ENCODE measurements at regions of chr12 and their contacts with region 1.

Region 1: DNA sequence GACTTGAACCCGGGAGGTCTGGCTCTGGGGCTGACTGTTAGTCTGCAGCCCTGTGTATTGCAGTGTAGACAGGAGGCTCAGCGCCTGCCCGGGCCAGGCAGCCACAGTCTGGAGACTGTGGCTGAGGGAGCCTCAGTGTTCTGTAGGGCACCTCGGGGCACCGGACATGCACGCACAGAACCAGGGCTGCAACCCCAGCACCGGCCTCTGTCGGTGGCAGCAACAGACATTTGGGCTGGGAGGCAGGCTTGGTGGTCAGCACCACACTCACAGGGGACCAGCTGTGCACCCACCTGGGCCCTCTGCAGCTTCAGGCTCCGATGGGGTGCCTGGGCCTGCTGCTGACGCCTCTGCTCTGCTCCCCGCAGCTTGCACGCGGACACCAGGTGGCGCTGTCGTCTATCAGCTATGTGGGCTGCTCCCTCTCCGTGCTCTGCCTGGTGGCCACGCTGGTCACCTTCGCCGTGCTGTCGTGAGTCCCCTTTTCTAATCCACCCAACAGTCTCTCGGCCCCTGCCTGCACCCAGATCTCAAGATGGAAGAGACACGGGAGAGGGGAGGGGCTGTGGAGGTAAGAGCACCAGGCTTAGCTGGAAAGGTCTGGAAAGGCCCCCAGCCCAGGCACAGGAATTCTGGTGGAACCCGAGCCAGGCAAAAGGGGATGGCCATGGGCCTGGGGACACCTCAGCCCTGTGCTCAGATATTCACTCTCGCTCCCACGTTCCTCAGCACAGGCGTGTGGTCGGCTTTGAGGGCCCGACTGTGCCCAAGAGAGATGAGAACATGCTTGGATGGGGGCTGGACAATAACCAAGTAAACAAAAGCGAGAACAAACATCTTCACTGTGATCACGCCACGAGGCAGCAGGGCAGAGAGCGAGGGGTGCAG is 151.0 kb downstream of the ADGRD1 start:
- ATAC-seq: peak; percentile 91 to 99 (median 94)
- H3K4me3 ChIP-seq: no peak overlapping the region
- H3K27ac ChIP-seq: peak overlapping the region; percentile 13 to 29
- H3K4me1 ChIP-seq: peaks cover 19 to 27% of the 10 kb centered on the region in 2 donors

Region 2: GRCh38 chr12:130702966-130703732 is 401.6 kb before region 1 on chr12:
- in situ Hi-C with region 1: no loop called
- ATAC-seq: peak in 1 of 8 experiments; percentile 34
- H3K4me3 ChIP-seq: no peak overlapping the region
- H3K27ac ChIP-seq: peak overlapping the region in 1 of 2 donors; percentile 41
- H3K4me1 ChIP-seq: peaks cover 0 to 43% of the 10 kb centered on the region in 2 donors

Region 3: DNA sequence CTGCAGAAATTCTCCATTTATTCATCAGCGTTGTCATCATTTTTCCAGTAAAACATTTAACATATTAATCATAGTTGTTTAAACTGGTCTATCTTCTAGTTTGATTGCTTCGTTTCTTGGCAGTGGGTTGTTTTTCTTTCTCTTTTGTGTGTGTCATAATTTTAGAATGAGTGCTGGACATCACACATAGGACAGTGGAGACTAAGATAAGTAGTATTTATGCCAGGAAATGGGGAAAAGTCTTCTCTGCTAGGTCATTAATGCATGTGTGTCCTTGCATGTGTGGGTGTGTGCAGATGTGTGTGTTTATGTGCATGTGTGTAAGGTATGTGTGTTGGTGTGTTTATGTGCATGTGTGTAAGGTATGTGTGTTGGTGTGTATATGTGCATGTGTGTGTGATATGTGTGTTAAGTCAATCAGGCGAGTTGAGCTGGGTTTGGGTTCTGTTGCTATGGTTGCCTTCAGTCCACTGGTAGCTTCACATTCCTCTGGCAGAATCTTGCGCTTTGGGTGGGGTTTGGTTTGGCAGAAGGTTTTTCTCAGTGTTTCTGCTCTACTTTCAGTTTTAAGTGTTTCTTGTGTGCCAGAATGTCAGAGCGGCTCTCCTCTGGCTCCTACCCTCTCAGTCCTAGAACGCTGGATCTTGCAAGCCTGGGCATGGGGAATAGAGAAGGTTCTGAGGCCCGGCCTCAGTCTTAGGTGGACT is 158.8 kb before region 1 on chr12:
- in situ Hi-C with region 1: loop called in 1 of 9 experiments (anchors 25 kb)
- ATAC-seq: peak in 2 of 8 experiments; percentile 72 to 73
- H3K4me3 ChIP-seq: no peak overlapping the region
- H3K27ac ChIP-seq: no peak overlapping the region
- H3K4me1 ChIP-seq: peaks cover 0 to 6% of the 10 kb centered on the region in 2 donors

Region 4: GRCh38 chr12:130970165-130970907 is 134.4 kb before region 1 on chr12:
- in situ Hi-C with region 1: no loop called
- ATAC-seq: no peak
- H3K4me3 ChIP-seq: no peak overlapping the region
- H3K27ac ChIP-seq: no peak overlapping the region
- H3K4me1 ChIP-seq: peaks cover 2 to 18% of the 10 kb centered on the region in 2 donors

Region 5: DNA sequence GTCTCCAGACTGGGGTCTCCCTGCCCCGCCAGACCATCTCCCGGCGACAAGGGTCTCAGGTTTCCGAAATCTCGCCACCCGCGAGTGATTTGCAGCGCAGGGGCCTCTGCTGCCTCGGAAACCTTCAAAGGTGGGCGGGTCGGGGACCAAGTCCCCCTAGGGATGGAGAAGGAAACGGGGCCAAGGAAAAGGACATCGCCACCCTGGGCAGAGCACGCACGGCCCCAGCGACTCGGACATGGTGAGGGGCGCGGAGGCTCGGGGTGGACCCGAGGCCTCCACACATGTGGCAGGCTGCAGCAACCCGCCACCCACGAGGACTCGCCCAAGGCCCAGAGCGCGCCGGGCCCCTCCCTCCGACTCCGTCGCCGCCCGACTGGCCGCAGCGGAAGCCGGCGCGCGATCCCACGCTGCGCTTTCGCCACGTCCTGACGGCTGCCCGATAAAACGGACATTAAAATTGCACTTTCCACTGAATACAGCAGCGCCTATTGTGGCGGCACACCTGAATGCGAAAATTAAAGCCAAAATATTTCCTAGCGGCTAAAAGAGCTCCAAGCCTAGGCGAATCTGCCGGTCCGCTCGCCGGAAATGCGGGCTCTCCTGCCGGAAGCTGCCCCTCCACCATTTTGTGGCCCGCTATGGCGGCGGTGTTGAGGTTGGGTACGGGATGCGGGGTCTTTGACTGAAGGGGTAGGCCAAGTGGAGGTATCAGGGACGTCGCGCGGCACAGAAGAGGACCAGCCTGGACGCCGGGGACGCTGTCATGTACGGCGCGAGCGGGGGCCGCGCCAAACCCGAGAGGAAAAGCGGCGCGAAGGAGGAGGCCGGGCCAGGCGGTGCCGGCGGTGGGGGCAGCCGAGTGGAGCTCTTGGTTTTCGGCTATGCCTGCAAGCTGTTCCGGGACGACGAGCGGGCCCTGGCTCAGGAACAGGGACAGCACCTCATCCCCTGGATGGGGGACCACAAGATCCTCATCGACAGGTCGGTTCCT is 606.1 kb after region 1 on chr12 and contains the start of gene SFSWAP:
- in situ Hi-C with region 1: loop called in 1 of 9 experiments (anchors 25 kb)
- ATAC-seq: peak; percentile 85 to 98 (median 98)
- H3K4me3 ChIP-seq: peak within 1 kb of the TSS; percentile 57 to 98 (median 92)
- H3K27ac ChIP-seq: peak within 1 kb of the TSS; percentile 98 to 99
- H3K4me1 ChIP-seq: peaks cover 11 to 15% of the 10 kb centered on the region in 2 donors
- total RNA-seq, gene SFSWAP: 25.2 to 84.4 (median 29.3) TPM

Region 6: GRCh38 chr12:131830335-131830913 is 725.7 kb after region 1 on chr12:
- in situ Hi-C with region 1: loop called in 1 of 9 experiments (anchors 25 kb)
- ATAC-seq: peak; percentile 54 to 76 (median 70)
- H3K4me3 ChIP-seq: peak overlapping the region; percentile 41 to 60 (median 49)
- H3K27ac ChIP-seq: peak overlapping the region; percentile 63 to 78
- H3K4me1 ChIP-seq: peaks cover 20 to 38% of the 10 kb centered on the region in 2 donors